Dorsolateral prefrontal cortex (tissue), 120 donors: ENCODE measurements at regions of chr2 and their contacts with region 1.

Region 1: DNA sequence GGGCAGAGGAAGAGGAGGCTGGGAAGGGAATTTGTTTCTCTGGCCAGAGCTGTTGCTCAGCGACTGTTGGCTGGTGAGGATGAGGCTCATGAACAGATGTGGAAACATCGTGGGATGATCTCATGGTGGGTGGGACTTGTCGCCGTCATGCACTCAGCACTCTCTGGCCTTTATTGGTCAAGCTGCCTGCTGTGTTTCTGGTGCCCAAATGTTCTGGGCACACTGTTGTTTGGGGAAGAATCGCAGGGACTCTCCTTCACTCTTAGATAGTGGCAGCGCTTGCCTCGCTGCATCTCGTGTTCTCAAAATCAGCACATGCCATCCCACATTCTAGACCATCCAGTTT is 145.6 kb downstream of the AGAP1 start:
- DNase-seq: peak; percentile 33 to 97 (median 92)
- H3K4me3 ChIP-seq: peak overlapping the region in 34 of 59 donors; percentile 4 to 57 (median 28)
- H3K27ac ChIP-seq: peak overlapping the region; percentile 74 to 99 (median 96)
- H3K27me3 ChIP-seq: no peaks in the 10 kb centered on the region
- CTCF ChIP-seq: peak in 1 of 56 donors; percentile 5

Region 2: GRCh38 chr2:235378261-235378660 is 261.1 kb before region 1 on chr2:
- intact Hi-C with region 1: no loop called
- DNase-seq: peak in 1 of 10 donors; percentile 62
- H3K4me3 ChIP-seq: no peak overlapping the region
- H3K27ac ChIP-seq: no peak overlapping the region
- H3K27me3 ChIP-seq: peaks cover 0 to 3% (median 0%) of the 10 kb centered on the region in 45 donors
- CTCF ChIP-seq: no peak

Region 3: DNA sequence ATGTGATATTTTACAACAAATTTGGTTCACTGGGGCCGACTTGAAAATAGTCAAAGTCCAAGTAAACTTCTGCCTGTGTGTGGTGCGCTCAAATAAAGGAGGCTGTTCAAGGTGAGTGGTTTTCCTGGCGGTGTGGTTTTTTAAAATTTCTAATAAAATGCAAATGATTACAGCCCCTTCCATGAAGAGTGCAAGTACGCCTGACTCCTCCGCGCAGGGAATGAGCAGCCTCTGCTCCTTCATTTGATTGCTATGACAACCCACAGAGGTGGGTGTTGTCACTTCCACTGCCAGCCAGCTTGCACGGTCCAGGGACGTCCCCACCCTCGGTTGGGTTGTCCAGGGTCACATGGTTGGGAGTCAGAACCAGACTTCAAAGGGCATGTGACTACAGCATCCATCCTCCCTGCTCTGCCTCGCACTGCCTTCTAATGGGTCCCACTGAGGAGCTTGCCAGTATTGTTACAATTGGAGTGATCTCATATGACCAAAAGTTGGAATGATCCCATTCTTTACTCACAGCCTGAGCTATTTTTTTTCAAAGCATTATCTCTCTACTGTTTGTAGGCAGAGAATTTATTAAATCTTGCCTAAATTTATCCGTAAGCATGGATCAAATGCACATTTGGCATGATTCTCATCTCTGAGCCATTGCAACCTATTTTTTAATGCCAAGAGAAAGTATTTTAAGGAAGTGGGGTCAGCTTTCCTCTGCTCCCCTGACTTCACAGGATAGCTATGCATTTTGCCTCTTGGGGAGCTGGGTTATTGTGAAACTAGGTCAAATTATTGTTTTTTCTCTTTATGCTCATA is 24.3 kb before region 1 on chr2:
- intact Hi-C with region 1: loop called (anchors 1 kb)
- DNase-seq: peak in 9 of 10 donors; percentile 71 to 96 (median 92)
- H3K4me3 ChIP-seq: peak overlapping the region in 20 of 59 donors; percentile 1 to 41 (median 16)
- H3K27ac ChIP-seq: peak overlapping the region; percentile 58 to 99 (median 93)
- H3K27me3 ChIP-seq: no peaks in the 10 kb centered on the region
- CTCF ChIP-seq: peak in 4 of 56 donors; percentile 5 to 39 (median 15)

Region 4: DNA sequence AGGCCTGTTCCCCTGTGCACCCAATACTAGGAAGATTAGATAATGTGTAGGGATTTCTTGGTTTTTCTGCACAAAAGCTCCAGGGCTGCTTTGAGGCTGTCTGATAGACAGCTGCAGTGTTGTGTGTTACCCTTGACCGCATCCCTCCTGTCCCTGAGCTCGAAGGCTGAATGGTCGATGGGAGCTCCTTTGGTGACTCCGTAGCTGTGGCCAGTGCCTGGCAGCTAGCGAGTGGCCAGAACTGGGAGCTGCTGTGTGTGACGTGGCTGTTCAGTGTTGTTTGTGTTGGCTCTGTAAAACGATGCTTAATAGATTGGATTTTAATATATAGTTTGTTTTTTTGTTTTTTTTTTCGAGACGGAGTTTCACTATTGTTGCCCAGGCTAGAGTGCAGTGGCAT is 24.5 kb after region 1 on chr2:
- intact Hi-C with region 1: loop called (anchors 2 kb)
- DNase-seq: peak in 2 of 10 donors; percentile 47 to 54
- H3K4me3 ChIP-seq: peak overlapping the region in 3 of 59 donors; percentile 7 to 16 (median 9)
- H3K27ac ChIP-seq: peak overlapping the region in 51 of 59 donors; percentile 3 to 82 (median 44)
- H3K27me3 ChIP-seq: no peaks in the 10 kb centered on the region
- CTCF ChIP-seq: no peak

Region 5: GRCh38 chr2:235728800-235729556 is 89.6 kb after region 1 on chr2:
- intact Hi-C with region 1: no loop called
- DNase-seq: peak in 1 of 10 donors; percentile 38
- H3K4me3 ChIP-seq: no peak overlapping the region
- H3K27ac ChIP-seq: peak overlapping the region in 52 of 59 donors; percentile 11 to 97 (median 68)
- H3K27me3 ChIP-seq: no peaks in the 10 kb centered on the region
- CTCF ChIP-seq: no peak